Activated T-helper 1 cell treated with anti-CD3 and anti-CD28 coated beads, Interleukin-12 subunit alpha, Interleukin-12 subunit beta, Interleukin-2, Interleukin-4 antibody, amounts not matched to agents 30 ng/mL and 10 ng/mL and 1 ng/mL, durations not matched to agents 14 hours and 24 hours and 36 hours (primary cell): ENCODE measurements at regions of chr11 and their contacts with region 1.

Region 1: DNA sequence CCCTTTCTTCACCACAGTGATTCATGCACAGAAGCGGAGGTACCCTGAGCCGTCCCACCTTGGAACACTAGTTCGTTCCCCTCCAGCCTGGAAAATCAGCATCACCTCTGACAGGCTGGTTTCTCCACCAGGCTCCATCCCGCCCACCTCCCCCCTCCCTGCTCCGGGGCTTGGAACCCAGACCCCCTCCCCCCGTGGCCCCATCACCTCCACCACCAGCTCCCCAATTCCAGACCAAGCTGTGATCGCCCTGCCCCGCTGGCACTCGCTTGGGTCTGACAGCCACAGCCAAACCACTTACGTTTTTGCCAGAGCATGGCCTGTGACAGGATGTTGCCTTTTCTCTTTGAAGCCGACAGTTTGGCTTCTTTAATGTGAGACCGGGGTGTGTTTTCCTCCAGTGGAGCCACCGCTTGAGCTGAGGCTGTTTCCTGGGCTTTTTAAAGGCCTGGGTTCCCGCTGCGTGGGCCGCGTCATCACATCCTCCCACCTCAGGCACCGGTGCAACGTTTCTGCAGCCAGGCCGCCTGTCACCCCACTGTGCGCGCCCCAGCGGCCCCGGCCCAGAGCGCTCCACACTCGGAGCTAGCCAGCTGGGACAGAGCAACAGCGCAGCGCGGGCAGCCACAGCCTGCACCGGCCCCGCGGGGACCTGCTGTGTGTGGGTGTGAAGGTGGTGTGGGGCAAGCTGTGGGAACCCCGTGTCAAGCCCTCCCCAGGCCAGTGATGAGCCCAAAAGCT is at the start of gene POU2AF1:
- DNase-seq: peak; percentile 71
- H3K4me3 Mint-ChIP-seq: peak within 1 kb of the TSS; percentile 83
- H3K27ac Mint-ChIP-seq: peak within 1 kb of the TSS; percentile 100
- H3K4me1 Mint-ChIP-seq: peaks cover 81% of the 10 kb centered on the region
- H3K27me3 Mint-ChIP-seq: no peaks in the 10 kb centered on the region
- total RNA-seq, gene POU2AF1: 80.7 and 81.0 TPM in 2 replicates

Region 2: DNA sequence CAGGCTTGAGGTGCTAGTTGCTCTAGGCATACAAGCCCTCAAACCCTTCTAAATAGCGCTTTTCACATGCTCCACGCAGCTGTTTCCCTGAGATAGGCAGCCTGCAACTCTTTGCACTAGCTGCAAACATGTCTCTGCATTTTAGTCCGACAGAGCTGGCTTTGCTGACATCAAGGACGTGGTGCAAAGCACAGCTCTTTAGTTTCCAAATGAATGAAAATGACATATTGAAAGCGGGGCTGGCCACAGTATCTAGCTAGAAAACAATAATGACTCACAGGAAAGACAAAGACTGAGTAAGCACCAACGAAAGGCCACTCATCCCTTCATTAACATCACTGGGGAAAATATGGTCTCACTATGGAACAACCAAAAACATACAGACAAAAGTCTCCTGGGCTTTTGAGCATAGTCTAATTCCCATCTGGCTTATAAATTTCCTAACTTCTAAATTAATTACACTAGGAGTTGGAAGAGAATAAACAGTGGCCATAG is 1301.2 kb before region 1 on chr11:
- intact Hi-C with region 1: loop called (anchors 5 kb)
- DNase-seq: peak; percentile 47
- H3K4me3 Mint-ChIP-seq: peak overlapping the region; percentile 28
- H3K27ac Mint-ChIP-seq: peak overlapping the region; percentile 75
- H3K4me1 Mint-ChIP-seq: peaks cover 38% of the 10 kb centered on the region
- H3K27me3 Mint-ChIP-seq: peaks cover 8% of the 10 kb centered on the region

Region 3: DNA sequence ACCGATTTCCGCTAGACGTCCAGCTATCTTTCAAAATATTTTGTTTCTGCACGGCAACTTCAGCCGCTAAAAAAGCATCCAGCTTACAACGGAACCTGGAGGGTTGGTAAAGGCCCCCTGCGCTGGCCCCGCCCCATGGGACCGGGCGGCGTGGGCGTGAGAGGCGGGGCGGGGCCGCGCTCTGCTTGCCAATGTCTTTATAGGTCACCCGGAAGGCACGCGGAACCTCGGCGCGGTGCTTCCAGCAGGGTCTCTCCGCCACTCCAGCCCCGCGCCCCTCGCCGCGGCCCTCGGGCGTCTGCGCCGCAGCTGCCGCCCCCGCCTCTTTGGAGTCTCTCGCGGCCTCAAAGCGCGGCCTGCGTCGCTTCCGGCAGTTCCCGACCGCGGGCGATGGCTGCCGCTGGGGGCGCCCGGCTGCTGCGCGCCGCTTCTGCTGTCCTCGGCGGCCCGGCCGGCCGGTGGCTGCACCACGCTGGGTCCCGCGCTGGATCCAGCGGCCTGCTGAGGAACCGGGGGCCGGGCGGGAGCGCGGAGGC is 949.2 kb before region 1 on chr11 and contains the start of gene FDX1:
- intact Hi-C with region 1: loop called (anchors 5 kb)
- DNase-seq: peak; percentile 82
- H3K4me3 Mint-ChIP-seq: peak within 1 kb of the TSS; percentile 99
- H3K27ac Mint-ChIP-seq: peak within 1 kb of the TSS; percentile 98
- H3K4me1 Mint-ChIP-seq: peaks cover 51% of the 10 kb centered on the region
- H3K27me3 Mint-ChIP-seq: no peaks in the 10 kb centered on the region
- total RNA-seq, gene FDX1: 14.2 and 15.9 TPM in 2 replicates

Region 4: GRCh38 chr11:111359223-111360149 is 19.5 kb before region 1 on chr11:
- intact Hi-C with region 1: loop called (anchors 1 kb)
- DNase-seq: no peak
- H3K4me3 Mint-ChIP-seq: no peak overlapping the region
- H3K27ac Mint-ChIP-seq: no peak overlapping the region
- H3K4me1 Mint-ChIP-seq: peaks cover 25% of the 10 kb centered on the region
- H3K27me3 Mint-ChIP-seq: no peaks in the 10 kb centered on the region

Region 5: DNA sequence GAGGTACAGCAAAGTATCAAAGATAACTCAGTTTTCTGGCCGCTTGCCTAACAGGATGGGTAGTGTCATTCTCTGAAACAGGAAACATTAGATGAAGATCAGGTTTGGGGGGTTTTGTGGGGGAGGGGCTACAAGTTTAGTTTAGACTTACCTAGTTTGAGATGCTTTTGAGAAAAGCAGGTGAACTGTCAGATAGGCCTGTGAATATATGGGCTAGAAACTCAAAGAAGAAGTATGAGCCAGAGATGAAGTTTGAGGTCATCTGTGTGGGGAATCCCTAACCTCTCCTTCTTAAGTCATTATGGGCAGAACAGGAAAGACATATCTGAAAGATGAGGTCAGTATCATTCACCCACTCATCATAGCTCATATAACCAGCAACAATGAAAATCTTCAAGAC is 147.5 kb after region 1 on chr11:
- intact Hi-C with region 1: loop called (anchors 1 kb)
- DNase-seq: no peak
- H3K4me3 Mint-ChIP-seq: no peak overlapping the region
- H3K27ac Mint-ChIP-seq: peak overlapping the region; percentile 24
- H3K4me1 Mint-ChIP-seq: peaks cover 43% of the 10 kb centered on the region
- H3K27me3 Mint-ChIP-seq: no peaks in the 10 kb centered on the region

Region 6: GRCh38 chr11:111565114-111565720 is 186.2 kb after region 1 on chr11:
- intact Hi-C with region 1: no loop called
- DNase-seq: peak; percentile 28
- H3K4me3 Mint-ChIP-seq: no peak overlapping the region
- H3K27ac Mint-ChIP-seq: no peak overlapping the region
- H3K4me1 Mint-ChIP-seq: no peaks in the 10 kb centered on the region
- H3K27me3 Mint-ChIP-seq: no peaks in the 10 kb centered on the region

Region 7: DNA sequence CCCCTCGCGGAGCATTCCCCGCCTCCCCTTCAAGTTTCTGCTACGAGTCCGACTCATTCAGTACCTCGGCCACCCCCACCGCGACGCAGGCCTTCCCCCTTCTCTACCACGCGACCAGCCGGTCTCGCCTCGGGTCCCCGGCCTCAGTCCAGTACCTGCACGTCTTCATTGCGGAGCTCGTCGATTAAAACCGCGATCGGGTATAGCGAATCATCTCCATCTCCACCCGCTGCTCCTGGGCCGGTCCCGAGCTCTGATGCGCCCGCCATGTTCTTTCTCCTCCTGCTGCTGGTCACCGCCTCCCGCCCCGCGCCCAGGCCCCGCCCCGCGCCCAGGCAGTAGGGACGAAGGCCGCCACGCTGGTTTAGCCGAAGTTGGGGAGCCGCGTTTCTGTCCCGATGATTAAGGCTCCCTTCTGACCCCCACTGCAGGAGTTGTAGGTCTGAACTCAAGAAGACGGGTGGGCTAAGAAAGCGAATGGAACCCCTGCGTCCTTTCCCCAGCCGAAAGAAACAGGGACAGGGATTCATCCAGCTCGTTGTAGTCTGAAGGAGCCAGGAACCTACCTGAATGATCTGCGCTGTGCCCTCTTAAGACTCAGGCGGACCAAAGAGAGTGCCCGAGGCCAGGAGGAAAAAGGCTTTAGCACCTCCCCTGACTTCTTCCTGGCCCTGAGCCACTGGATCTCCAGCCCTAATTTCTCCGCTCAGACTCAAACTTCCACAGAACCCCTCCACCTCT is 387.2 kb after region 1 on chr11 and contains the start of gene PPP2R1B:
- intact Hi-C with region 1: loop called (anchors 10 kb)
- DNase-seq: peak; percentile 60
- H3K4me3 Mint-ChIP-seq: peak within 1 kb of the TSS; percentile 96
- H3K27ac Mint-ChIP-seq: peak within 1 kb of the TSS; percentile 97
- H3K4me1 Mint-ChIP-seq: peaks cover 43% of the 10 kb centered on the region
- H3K27me3 Mint-ChIP-seq: no peaks in the 10 kb centered on the region
- total RNA-seq, gene PPP2R1B: 58.1 and 61.4 TPM in 2 replicates

Region 8: DNA sequence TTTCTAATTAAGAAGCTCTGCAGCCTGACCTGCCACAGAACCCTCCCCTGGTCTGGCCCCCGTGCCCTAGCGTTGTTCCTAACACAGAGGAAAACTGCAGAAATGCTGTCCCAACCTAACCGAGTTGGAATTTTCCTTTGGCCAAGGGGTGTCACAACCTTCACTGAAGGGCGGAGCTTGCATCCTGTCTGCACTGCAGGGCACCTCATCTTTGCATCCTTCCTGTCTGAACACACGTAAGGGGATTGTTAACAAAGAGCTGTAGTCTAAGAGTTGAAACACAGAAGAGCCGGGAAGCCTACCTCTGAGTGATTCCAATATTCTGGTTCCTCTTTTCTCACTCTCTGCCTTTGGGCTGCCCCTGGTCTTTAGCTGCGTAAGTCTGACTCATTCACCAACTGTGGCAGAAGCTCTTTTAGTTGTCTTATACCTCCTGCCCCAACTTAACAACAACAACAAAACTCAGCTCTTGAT is 559.7 kb after region 1 on chr11:
- intact Hi-C with region 1: loop called (anchors 2 kb)
- DNase-seq: peak; percentile 22
- H3K4me3 Mint-ChIP-seq: peak overlapping the region; percentile 88
- H3K27ac Mint-ChIP-seq: peak overlapping the region; percentile 92
- H3K4me1 Mint-ChIP-seq: peaks cover 58% of the 10 kb centered on the region
- H3K27me3 Mint-ChIP-seq: no peaks in the 10 kb centered on the region